KBM-7 (cell line): ENCODE measurements at regions of chr3 and their contacts with region 1.

Region 1: DNA sequence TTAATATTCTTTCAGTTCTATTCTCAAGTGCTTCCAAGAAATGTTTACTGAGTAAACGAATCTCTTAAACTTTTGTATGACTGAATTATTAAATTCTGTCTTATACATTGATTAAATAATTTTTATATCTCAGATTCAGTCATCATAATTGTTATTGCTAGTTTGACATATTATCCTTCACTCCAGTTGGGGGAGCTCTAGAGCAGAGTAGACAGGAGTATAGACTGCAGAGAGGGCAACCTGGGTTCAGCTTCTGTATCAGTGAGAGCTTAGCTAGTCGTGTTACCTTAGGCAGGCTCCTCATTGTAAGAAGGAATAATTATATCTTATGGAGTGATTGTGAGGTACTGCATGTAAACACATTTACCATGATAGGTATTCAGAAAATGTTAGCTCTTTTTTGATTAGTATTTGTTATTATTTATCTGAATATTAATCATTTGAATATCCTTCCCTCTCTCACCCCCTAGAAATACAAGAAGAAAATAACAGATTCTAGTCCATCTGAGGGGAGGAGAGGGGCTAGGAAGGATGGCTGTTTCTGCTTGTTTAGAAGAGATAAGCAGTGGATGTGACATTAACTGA is 31.0 kb upstream of the ZCWPW2 start:
- DNase-seq: peak; percentile 21

Region 2: GRCh38 chr3:27712136-27713077 is 605.1 kb before region 1 on chr3:
- in situ Hi-C with region 1: loop called (anchors 25 kb)
- DNase-seq: peak; percentile 77